WTC11 (cell line): ENCODE measurements at regions of chr17 and their contacts with region 1.

Region 1: DNA sequence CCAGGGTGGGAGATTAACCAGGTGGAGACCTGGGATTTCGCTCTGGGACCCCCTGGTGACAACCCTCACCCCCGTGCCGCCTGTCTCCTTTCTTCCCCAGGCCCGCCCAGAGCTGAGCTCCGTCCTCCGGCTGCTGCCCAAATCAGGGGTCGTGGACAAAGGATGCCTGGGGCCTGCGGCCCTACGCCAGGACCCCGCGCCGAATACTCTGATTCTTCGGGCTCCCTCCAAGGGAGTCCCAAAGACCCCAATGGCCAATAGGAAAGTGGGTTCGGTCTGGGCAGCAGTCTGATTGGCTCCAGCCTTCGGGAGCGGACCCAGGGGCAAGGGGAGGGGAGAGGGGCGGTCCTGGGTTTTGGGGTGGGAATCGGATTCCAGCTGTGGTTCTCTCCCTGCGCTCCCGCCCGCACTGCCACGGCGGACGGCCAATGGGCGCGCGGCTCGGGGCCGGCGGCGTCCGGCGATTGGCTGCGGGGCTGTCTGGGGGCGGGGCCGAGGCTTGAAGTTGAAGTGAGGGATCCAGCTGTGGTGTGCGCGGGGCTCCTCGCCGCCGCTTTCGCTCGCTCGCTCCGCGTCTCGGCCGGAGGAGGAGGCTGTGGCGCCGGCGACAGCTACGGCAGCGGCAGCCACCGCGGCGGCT is at the start of gene CACNA1G:
- DNase-seq: peak; percentile 98
- ATAC-seq: peak; percentile 83
- H3K4me3 Mint-ChIP-seq: peak within 1 kb of the TSS; percentile 87
- H3K27ac Mint-ChIP-seq: peak within 1 kb of the TSS; percentile 97
- H3K4me1 Mint-ChIP-seq: peaks cover 37% of the 10 kb centered on the region
- H3K27me3 Mint-ChIP-seq: peaks cover 75% of the 10 kb centered on the region
- CTCF ChIP-seq: no peak
- total RNA-seq, gene CACNA1G: 5.4 to 6.7 TPM (median 6.2 TPM) in 3 replicates

Region 2: GRCh38 chr17:50452610-50453300 is 107.5 kb before region 1 on chr17:
- CTCF ChIA-PET with region 1: no interaction called
- POLR2A ChIA-PET with region 1: no interaction called
- DNase-seq: no peak
- ATAC-seq: no peak
- H3K4me3 Mint-ChIP-seq: no peak overlapping the region
- H3K27ac Mint-ChIP-seq: no peak overlapping the region
- H3K4me1 Mint-ChIP-seq: no peaks in the 10 kb centered on the region
- H3K27me3 Mint-ChIP-seq: no peaks in the 10 kb centered on the region
- CTCF ChIP-seq: no peak

Region 3: DNA sequence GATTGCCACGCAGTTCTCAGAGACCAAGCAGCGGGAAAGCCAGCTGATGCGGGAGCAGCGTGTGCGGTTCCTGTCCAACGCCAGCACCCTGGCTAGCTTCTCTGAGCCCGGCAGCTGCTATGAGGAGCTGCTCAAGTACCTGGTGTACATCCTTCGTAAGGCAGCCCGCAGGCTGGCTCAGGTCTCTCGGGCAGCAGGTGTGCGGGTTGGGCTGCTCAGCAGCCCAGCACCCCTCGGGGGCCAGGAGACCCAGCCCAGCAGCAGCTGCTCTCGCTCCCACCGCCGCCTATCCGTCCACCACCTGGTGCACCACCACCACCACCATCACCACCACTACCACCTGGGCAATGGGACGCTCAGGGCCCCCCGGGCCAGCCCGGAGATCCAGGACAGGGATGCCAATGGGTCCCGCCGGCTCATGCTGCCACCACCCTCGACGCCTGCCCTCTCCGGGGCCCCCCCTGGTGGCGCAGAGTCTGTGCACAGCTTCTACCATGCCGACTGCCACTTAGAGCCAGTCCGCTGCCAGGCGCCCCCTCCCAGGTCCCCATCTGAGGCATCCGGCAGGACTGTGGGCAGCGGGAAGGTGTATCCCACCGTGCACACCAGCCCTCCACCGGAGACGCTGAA is 15.4 kb after region 1 on chr17:
- CTCF ChIA-PET with region 1: interaction called, 18 read pairs
- POLR2A ChIA-PET with region 1: interaction called, 4 read pairs
- DNase-seq: peak; percentile 49
- ATAC-seq: peak; percentile 47
- H3K4me3 Mint-ChIP-seq: no peak overlapping the region
- H3K27ac Mint-ChIP-seq: no peak overlapping the region
- H3K4me1 Mint-ChIP-seq: peaks cover 14% of the 10 kb centered on the region
- H3K27me3 Mint-ChIP-seq: no peaks in the 10 kb centered on the region
- CTCF ChIP-seq: no peak

Region 4: GRCh38 chr17:50604513-50604912 is 44.2 kb after region 1 on chr17:
- CTCF ChIA-PET with region 1: interaction called, 14 read pairs
- POLR2A ChIA-PET with region 1: interaction called, 3 read pairs
- DNase-seq: peak; percentile 42
- ATAC-seq: peak; percentile 61
- H3K4me3 Mint-ChIP-seq: no peak overlapping the region
- H3K27ac Mint-ChIP-seq: no peak overlapping the region
- H3K4me1 Mint-ChIP-seq: peaks cover 17% of the 10 kb centered on the region
- H3K27me3 Mint-ChIP-seq: no peaks in the 10 kb centered on the region
- CTCF ChIP-seq: no peak

Region 5: DNA sequence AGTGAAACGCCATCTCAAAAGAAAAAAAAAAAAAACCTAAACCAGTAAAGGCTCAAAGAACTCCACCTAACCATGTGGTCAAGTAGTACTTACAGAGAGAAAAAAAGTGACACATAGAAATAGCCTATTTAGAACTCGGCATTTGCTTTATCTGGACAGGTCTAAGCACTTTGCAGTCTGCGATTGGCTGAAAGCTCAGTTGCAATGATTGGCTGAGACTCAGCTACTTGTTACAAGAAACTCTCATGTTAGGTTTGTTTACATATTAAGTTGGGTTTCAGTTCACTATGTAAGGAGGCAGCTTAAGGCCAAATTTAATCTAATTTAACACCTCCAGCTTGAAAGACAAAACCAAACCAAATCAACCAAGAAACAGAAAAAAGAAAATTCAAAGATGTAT is 93.4 kb after region 1 on chr17:
- CTCF ChIA-PET with region 1: no interaction called
- POLR2A ChIA-PET with region 1: no interaction called
- DNase-seq: no peak
- ATAC-seq: no peak
- H3K4me3 Mint-ChIP-seq: no peak overlapping the region
- H3K27ac Mint-ChIP-seq: no peak overlapping the region
- H3K4me1 Mint-ChIP-seq: no peaks in the 10 kb centered on the region
- H3K27me3 Mint-ChIP-seq: no peaks in the 10 kb centered on the region
- CTCF ChIP-seq: no peak

Region 6: DNA sequence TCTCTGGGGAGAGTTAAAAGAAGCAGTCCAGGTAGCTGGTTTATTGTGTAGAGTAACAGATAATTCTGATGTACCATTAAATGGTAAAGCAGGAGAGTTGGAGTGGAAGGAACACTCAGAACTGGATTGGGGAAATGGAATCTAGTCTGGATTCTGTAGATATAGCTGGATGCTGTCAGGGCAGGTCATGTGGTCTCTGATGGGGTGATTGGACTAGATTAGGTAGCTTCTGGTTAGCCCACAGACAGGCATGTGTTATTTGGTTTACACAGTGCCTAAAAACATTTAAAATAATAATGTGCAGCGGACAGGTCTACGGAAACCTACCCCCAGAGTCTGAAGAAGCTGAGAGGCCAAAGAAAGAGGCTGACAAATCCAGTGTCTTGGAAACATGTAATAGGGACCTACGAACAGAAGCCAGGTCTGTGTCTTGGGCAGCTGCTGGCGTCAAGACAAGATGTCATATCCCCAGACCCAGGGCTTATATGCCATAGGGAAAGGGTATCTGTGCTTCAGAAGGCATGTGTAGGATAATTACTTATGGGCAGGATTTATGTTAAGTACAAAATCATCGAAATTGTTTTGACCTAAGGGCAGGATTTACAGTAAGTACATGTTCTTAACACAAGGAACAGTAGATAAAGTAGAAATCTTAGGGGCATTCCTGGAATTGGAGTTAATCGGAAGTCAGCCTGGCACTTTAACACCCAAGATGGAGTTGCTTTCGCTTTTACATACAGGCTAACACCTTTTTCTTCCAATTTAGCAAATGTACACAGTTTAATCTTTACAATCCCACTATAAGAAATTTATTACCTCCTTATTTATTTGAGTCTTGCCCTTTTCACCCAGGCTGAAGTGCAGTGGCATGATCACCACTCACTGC is 171.5 kb after region 1 on chr17:
- CTCF ChIA-PET with region 1: no interaction called
- POLR2A ChIA-PET with region 1: no interaction called
- DNase-seq: no peak
- ATAC-seq: no peak
- H3K4me3 Mint-ChIP-seq: no peak overlapping the region
- H3K27ac Mint-ChIP-seq: peak overlapping the region; percentile 36
- H3K4me1 Mint-ChIP-seq: peaks cover 17% of the 10 kb centered on the region
- H3K27me3 Mint-ChIP-seq: no peaks in the 10 kb centered on the region
- CTCF ChIP-seq: no peak